Ascending aorta (tissue), 2 donors: ENCODE measurements at regions of chr17 and their contacts with region 1.

Region 1: DNA sequence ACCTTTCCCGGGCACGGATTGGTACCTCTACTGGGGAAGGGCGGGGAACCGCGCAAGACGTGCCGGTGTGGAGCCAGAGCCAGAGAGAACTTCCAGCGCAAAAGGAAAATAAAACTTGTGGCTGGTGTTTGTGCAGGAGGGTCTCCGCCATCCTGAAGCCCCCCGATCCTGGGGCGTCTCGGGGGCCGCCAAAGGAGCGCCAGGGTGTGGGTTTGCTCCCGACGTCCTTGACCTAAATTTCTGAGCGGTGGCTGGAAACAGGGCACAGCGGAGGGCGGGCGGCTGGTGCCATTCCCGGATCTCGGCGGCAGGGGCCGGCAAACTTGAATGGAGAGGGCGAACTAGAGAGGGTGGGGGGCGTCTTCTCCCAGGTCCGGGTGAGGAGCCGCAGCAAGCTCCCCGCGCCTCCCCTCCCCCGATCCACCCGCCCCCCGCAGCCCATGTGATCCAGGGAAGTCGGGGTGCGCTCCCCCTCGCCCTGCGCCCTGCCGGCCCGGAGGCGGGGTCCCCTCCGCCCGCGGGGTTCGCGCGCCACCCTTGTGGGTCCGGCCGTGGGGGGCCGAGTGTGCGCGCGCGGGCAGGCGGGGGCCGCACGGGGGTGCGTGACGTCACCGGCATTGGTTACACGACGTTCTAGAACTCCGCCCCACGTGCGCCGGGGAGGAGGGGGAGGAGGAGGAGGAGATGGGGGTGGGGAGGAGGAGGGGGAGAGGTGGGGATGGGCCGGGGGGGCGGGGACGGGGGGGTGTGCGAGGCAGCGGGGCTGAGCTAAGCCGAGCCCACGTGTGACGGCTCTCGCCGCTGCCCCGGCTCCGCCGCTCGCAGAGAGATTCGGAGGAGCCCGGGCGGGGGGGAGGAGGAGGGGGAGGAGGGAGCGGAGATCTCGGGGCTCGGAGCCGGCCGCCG is at the start of gene MSI2:
- DNase-seq: peak; percentile 75 to 97
- H3K4me3 ChIP-seq: peak within 1 kb of the TSS; percentile 92 to 93
- H3K27ac ChIP-seq: peak within 1 kb of the TSS; percentile 97 to 99
- H3K4me1 ChIP-seq: peaks cover 5% of the 10 kb centered on the region in 2 donors
- H3K27me3 ChIP-seq: no peaks in the 10 kb centered on the region
- CTCF ChIP-seq: no peak
- total RNA-seq, gene MSI2: 11.7 TPM

Region 2: DNA sequence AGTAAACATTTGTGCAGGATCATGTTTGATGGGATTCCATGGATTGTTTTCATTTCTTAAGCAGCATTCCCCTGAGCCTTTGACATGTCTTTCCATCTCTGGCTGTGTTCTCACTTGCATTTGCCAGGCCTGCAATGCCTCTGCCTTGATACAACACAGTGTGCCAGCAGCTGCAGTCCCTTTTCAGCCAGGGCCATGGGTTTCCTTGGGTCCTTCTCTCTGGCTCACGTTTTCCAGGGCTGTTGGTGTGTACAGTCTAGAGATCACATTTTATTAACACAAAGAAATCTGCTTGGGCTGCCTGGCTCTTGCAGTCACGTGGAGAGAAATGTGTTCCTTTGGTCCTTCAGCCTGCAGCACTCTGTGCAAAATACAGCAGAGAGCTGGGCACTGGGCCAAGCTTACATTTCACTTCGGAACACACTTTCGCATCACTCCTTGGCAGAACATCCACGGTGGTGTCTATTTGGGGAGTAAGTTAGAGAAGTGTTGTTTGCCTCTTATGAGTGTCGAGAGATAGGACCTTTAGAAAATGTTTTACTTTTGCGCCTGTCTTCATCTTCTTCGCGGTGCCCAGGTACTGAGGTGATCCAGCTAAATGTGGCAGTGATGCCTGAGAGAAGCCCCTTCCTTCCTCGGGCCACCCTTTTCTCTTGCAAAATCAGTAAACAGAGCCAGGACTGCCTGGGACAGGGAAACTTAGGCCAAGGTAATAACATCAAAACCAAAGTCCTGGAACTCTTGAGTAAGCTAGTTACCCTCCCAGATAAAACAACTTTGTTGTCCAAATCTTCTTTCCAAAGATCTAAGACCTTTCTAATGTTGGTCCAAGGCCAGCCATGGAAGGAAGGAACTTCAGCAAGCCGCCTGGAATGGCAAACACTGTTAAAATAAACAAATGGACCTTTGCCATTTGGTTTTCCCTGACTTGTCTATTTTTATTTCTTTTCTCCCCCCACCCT is 1970.4 kb before region 1 on chr17:
- intact Hi-C with region 1: loop called (anchors 5 kb)
- DNase-seq: peak; percentile 66 to 96
- H3K4me3 ChIP-seq: peak overlapping the region; percentile 23 to 43
- H3K27ac ChIP-seq: peak overlapping the region; percentile 83 to 88
- H3K4me1 ChIP-seq: peaks cover 31 to 60% of the 10 kb centered on the region in 2 donors
- H3K27me3 ChIP-seq: no peaks in the 10 kb centered on the region
- CTCF ChIP-seq: no peak

Region 3: GRCh38 chr17:57541472-57542394 is 285.7 kb after region 1 on chr17:
- intact Hi-C with region 1: loop called (anchors 5 kb)
- DNase-seq: peak; percentile 64 to 90
- H3K4me3 ChIP-seq: peak overlapping the region in 1 of 2 donors; percentile 28
- H3K27ac ChIP-seq: peak overlapping the region; percentile 9 to 35
- H3K4me1 ChIP-seq: peaks cover 0 to 8% of the 10 kb centered on the region in 2 donors
- H3K27me3 ChIP-seq: no peaks in the 10 kb centered on the region
- CTCF ChIP-seq: no peak

Region 4: GRCh38 chr17:57833179-57833939 is 577.3 kb after region 1 on chr17:
- intact Hi-C with region 1: loop called (anchors 5 kb)
- DNase-seq: peak in 1 of 2 donors; percentile 85
- H3K4me3 ChIP-seq: peak overlapping the region; percentile 51 to 60
- H3K27ac ChIP-seq: peak overlapping the region; percentile 83 to 88
- H3K4me1 ChIP-seq: peaks cover 10 to 19% of the 10 kb centered on the region in 2 donors
- H3K27me3 ChIP-seq: no peaks in the 10 kb centered on the region
- CTCF ChIP-seq: peak; percentile 86 to 93 (median 92)

Region 5: DNA sequence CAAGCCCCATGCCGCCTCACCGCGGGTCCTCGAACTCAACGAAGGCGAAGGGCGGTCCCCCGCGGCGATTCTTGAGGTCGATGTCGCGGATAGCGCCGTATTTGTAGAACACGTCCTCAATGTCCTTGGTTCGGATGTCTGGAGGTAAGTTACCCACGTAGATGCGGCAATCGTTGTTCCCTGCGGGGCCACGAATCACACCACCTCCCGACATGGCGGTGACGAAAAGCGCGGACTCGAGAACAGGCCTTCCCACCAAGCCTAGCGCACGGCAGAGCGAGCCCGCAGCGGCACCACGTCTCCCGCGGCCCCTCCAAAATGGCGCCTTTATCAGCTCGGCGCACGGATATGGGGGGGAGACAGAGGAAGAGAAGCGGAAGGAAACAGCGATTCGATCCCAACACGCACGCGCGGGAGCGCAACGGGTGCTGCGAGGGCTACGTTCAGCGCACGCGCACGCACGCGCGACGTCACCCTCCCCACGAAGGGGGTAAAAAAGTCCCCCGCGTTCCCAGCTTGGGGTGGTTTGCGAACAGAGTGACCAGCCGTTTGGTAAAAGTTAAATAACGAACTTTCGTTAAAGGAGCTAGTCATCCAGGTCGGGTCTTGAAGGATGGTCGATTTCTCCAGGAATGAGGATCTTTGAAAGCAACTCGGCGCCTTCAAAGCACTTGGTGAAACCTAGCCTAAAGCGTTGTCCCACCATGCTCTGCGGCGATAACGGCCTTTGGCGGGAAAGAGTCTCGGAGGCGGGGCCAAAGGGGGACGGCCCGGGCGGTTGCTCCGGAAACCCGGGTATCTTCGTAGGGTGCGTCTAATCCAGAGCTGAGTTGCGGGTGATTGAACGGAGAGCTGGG is 751.1 kb after region 1 on chr17 and contains the start of gene SRSF1:
- intact Hi-C with region 1: loop called (anchors 5 kb)
- DNase-seq: peak; percentile 81 to 98
- H3K4me3 ChIP-seq: peak within 1 kb of the TSS; percentile 84 to 85
- H3K27ac ChIP-seq: peak within 1 kb of the TSS; percentile 96 to 99
- H3K4me1 ChIP-seq: peaks cover 4 to 33% of the 10 kb centered on the region in 2 donors
- H3K27me3 ChIP-seq: no peaks in the 10 kb centered on the region
- CTCF ChIP-seq: no peak
- total RNA-seq, gene SRSF1: 89.4 TPM